ENCODE measurements at regions of chr12 and their contacts with region 1.

Region 1: GRCh38 chr12:49060237-49061156 is at the start of gene KMT2D:
- DNase-seq: peak; percentile 91
- H3K4me3 Mint-ChIP-seq: peak within 1 kb of the TSS; percentile 93
- H3K27ac Mint-ChIP-seq: peak within 1 kb of the TSS; percentile 96
- H3K4me1 Mint-ChIP-seq: peaks cover 51% of the 10 kb centered on the region
- H3K27me3 Mint-ChIP-seq: no peaks in the 10 kb centered on the region
- total RNA-seq, gene KMT2D: 44.9 to 49.0 TPM

Region 2: GRCh38 chr12:48832321-48833060 is 228.0 kb before region 1 on chr12:
- CTCF ChIA-PET with region 1: no interaction called
- intact Hi-C with region 1: no loop called
- DNase-seq: no peak
- H3K4me3 Mint-ChIP-seq: no peak overlapping the region
- H3K27ac Mint-ChIP-seq: no peak overlapping the region
- H3K4me1 Mint-ChIP-seq: no peaks in the 10 kb centered on the region
- H3K27me3 Mint-ChIP-seq: no peaks in the 10 kb centered on the region

Region 3: GRCh38 chr12:49018261-49019119 is 42.0 kb before region 1 on chr12 and contains the start of gene PRKAG1:
- CTCF ChIA-PET with region 1: interaction called, 7 read pairs
- intact Hi-C with region 1: loop called (anchors 1 kb)
- DNase-seq: peak; percentile 96
- H3K4me3 Mint-ChIP-seq: peak within 1 kb of the TSS; percentile 87
- H3K27ac Mint-ChIP-seq: peak within 1 kb of the TSS; percentile 94
- H3K4me1 Mint-ChIP-seq: peaks cover 36% of the 10 kb centered on the region
- H3K27me3 Mint-ChIP-seq: no peaks in the 10 kb centered on the region
- total RNA-seq, gene PRKAG1: 49.4 to 50.9 TPM

Region 4: GRCh38 chr12:49098035-49098451 is 37.5 kb after region 1 on chr12:
- CTCF ChIA-PET with region 1: interaction called, 73 read pairs
- intact Hi-C with region 1: loop called (anchors 1 kb)
- DNase-seq: peak; percentile 76
- H3K4me3 Mint-ChIP-seq: no peak overlapping the region
- H3K27ac Mint-ChIP-seq: no peak overlapping the region
- H3K4me1 Mint-ChIP-seq: peaks cover 10% of the 10 kb centered on the region
- H3K27me3 Mint-ChIP-seq: peaks cover 21% of the 10 kb centered on the region

Region 5: DNA sequence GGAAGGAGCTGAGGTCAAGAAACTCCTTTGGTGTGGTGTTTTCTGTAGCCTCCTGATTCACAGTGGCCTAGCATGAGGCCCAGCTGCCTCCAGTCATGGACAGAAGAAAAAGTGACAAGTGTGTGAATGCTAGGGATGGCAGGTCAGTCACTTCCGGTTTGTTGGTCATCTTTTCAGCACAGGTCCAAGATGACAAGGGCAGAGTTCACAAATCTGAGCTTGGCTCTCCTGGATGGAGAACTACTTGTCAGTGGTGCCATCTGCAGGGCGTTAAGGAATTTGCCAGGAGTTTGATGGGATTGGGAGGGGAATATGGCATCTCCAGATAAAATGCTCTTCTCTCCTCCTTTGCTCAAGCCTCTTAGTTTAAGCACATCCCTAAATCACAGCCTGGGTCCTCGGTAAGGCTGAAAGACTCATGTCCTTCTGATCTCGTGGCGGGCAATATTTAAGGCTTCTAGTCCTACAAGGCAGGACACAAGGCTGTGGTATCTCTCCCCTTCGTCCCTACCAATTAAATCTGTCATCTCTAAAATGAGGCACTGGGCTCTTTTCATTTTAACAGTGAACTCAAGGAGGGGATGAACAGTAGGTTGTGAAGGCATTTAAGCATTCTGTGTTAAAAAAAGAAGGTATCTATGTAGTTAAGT is 60.7 kb after region 1 on chr12:
- CTCF ChIA-PET with region 1: interaction called, 6 read pairs
- intact Hi-C with region 1: loop called (anchors 1 kb)
- DNase-seq: peak; percentile 24
- H3K4me3 Mint-ChIP-seq: no peak overlapping the region
- H3K27ac Mint-ChIP-seq: no peak overlapping the region
- H3K4me1 Mint-ChIP-seq: no peaks in the 10 kb centered on the region
- H3K27me3 Mint-ChIP-seq: no peaks in the 10 kb centered on the region

Region 6: DNA sequence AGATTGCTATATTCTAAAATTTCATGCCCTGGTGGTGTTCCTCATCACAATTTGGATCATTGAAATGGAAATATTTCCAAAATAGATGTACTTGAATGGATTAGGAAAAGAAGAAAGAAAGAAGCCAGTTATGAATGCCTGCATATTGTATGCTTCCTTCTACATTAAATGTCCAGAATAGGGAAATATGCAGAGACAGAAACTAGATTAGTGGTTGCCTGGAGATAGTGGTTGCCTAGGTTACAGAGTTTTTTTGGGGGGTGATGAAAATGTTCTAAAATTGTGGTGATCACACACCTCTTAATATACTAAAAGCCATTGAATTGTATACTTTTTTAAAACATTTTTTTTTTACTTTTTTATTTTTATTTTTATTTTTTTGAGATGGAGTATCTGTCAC is 110.4 kb after region 1 on chr12:
- CTCF ChIA-PET with region 1: no interaction called
- intact Hi-C with region 1: no loop called
- DNase-seq: no peak
- H3K4me3 Mint-ChIP-seq: no peak overlapping the region
- H3K27ac Mint-ChIP-seq: no peak overlapping the region
- H3K4me1 Mint-ChIP-seq: no peaks in the 10 kb centered on the region
- H3K27me3 Mint-ChIP-seq: no peaks in the 10 kb centered on the region

Region 7: GRCh38 chr12:49188914-49189367 is 128.4 kb after region 1 on chr12 and contains the start of gene TUBA1A:
- CTCF ChIA-PET with region 1: no interaction called
- intact Hi-C with region 1: loop called (anchors 2 kb)
- DNase-seq: peak; percentile 97
- H3K4me3 Mint-ChIP-seq: peak within 1 kb of the TSS; percentile 84
- H3K27ac Mint-ChIP-seq: peak within 1 kb of the TSS; percentile 86
- H3K4me1 Mint-ChIP-seq: peaks cover 13% of the 10 kb centered on the region
- H3K27me3 Mint-ChIP-seq: no peaks in the 10 kb centered on the region
- total RNA-seq, gene TUBA1A: 47.4 to 49.1 TPM

Region 8: GRCh38 chr12:49776413-49776812 is 715.9 kb after region 1 on chr12:
- CTCF ChIA-PET with region 1: no interaction called
- intact Hi-C with region 1: no loop called
- DNase-seq: peak; percentile 80
- H3K4me3 Mint-ChIP-seq: no peak overlapping the region
- H3K27ac Mint-ChIP-seq: no peak overlapping the region
- H3K4me1 Mint-ChIP-seq: peaks cover 6% of the 10 kb centered on the region
- H3K27me3 Mint-ChIP-seq: peaks cover 3% of the 10 kb centered on the region